Ascending aorta (tissue), 2 donors: ENCODE measurements at regions of chr19 and their contacts with region 1.

Region 1: DNA sequence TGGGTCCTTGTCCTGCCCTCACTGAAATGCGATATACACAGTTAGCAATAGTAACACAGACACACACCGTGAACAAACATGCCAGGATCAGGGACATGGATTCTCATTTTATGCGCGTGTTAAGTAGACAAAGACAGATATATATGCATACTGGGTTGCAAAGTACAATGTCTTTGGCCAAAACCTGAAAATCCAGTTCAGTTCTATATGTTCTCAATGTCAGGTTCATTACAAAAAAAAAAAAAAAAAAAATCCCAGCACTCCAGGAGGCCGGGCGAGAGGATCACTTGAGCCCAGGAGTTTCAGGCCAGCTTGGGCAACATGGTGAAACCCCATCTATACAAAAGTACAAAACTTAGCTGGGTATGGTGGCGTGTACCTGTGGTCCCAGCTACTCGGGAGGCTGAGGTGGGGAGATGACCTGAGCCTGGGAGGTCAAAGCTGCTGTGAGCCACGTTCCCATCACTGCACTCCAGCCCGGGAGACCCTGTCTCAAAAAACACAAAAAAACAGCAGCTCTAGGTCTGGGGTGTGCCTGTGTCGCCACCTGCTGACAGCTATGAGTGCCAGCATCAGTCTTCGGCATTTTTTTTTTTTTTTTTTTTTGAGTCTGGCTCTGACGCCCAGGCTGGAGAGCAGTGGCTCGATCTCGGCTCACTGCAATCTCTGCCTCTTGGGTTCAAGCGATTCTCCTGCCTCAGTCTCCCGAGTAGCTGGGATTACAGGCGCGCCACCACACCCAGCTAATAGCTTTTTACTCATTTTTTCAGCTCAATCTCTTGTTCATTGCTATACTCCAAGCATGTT is 10.3 kb downstream of the AP2S1 start:
- DNase-seq: no peak
- H3K4me3 ChIP-seq: no peak overlapping the region
- H3K27ac ChIP-seq: peak overlapping the region; percentile 50 to 70
- H3K4me1 ChIP-seq: peaks cover 2 to 8% of the 10 kb centered on the region in 2 donors
- H3K27me3 ChIP-seq: no peaks in the 10 kb centered on the region
- CTCF ChIP-seq: peak; percentile 80 to 85 (median 82)

Region 2: DNA sequence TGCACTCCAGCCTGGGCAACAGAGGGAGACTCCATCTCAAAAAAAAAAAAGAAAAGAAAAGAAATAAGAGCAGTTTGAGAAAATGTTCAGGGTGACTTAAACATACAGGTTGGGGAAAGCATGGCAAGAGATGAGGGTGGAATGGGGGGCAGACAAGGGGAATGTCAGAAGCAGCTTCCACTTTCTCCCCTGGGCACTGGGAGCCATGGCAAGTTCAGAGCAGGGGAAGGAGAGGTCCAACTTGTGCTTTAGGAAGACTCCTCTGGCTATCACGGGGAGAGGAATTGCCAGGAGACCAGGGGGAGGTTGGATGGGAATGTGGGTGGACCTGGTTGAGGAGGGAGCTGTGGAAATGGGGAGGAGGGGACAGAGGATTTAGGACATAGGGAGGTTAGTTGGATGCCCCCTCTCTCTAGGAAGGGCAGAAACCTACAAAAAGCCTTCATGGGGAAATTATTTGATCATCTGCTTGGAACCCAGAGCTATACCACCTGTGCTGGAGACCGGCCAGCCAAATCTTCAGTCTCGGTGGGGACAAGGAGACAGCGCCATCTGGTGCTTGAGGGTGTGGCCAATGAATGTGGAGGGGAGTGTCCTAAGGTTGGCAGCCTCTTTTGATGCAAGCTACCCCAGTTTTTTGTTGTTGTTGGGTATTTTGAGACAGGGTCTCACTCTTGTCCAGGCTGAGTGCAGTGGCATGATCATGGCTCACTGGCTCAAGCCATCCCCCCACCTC is 86.8 kb before region 1 on chr19:
- intact Hi-C with region 1: loop called (anchors 1 kb)
- DNase-seq: no peak
- H3K4me3 ChIP-seq: no peak overlapping the region
- H3K27ac ChIP-seq: no peak overlapping the region
- H3K4me1 ChIP-seq: no peaks in the 10 kb centered on the region
- H3K27me3 ChIP-seq: no peaks in the 10 kb centered on the region
- CTCF ChIP-seq: peak; percentile 9 to 21 (median 21)

Region 3: GRCh38 chr19:46813839-46814363 is 26.4 kb before region 1 on chr19:
- intact Hi-C with region 1: loop called (anchors 1 kb)
- DNase-seq: peak in 1 of 2 donors; percentile 79
- H3K4me3 ChIP-seq: no peak overlapping the region
- H3K27ac ChIP-seq: peak overlapping the region; percentile 73 to 79
- H3K4me1 ChIP-seq: peaks cover 0 to 5% of the 10 kb centered on the region in 2 donors
- H3K27me3 ChIP-seq: no peaks in the 10 kb centered on the region
- CTCF ChIP-seq: no peak

Region 4: GRCh38 chr19:46860125-46860845 is 19.9 kb after region 1 on chr19:
- intact Hi-C with region 1: no loop called
- DNase-seq: peak; percentile 94 to 99
- H3K4me3 ChIP-seq: peak overlapping the region; percentile 85 to 87
- H3K27ac ChIP-seq: peak overlapping the region; percentile 97 to 100
- H3K4me1 ChIP-seq: peaks cover 12 to 32% of the 10 kb centered on the region in 2 donors
- H3K27me3 ChIP-seq: no peaks in the 10 kb centered on the region
- CTCF ChIP-seq: no peak